PC-3 (cell line): ENCODE measurements at regions of chr18 and their contacts with region 1.

Region 1: GRCh38 chr18:9136315-9137155 is at the start of gene ANKRD12:
- DNase-seq: peak; percentile 98
- ATAC-seq: peak; percentile 72
- H3K4me3 ChIP-seq: peak within 1 kb of the TSS; percentile 77
- H3K27ac ChIP-seq: peak within 1 kb of the TSS; percentile 88
- H3K4me1 ChIP-seq: peaks cover 58% of the 10 kb centered on the region
- H3K27me3 ChIP-seq: no peaks in the 10 kb centered on the region
- CTCF ChIP-seq: no peak
- total RNA-seq, gene ANKRD12: 14.5 and 19.1 TPM in 2 replicates

Region 2: GRCh38 chr18:8696749-8697211 is 439.8 kb before region 1 on chr18:
- CTCF ChIA-PET with region 1: no interaction called
- POLR2A ChIA-PET with region 1: no interaction called
- intact Hi-C with region 1: no loop called
- DNase-seq: peak; percentile 81
- ATAC-seq: peak; percentile 86
- H3K4me3 ChIP-seq: no peak overlapping the region
- H3K27ac ChIP-seq: no peak overlapping the region
- H3K4me1 ChIP-seq: peaks cover 10% of the 10 kb centered on the region
- H3K27me3 ChIP-seq: no peaks in the 10 kb centered on the region
- CTCF ChIP-seq: peak; percentile 88

Region 3: GRCh38 chr18:9066817-9067306 is 69.7 kb before region 1 on chr18:
- CTCF ChIA-PET with region 1: no interaction called
- POLR2A ChIA-PET with region 1: no interaction called
- intact Hi-C with region 1: loop called (anchors 2 kb)
- DNase-seq: no peak
- ATAC-seq: no peak
- H3K4me3 ChIP-seq: no peak overlapping the region
- H3K27ac ChIP-seq: no peak overlapping the region
- H3K4me1 ChIP-seq: peaks cover 14% of the 10 kb centered on the region
- H3K27me3 ChIP-seq: no peaks in the 10 kb centered on the region
- CTCF ChIP-seq: no peak

Region 4: DNA sequence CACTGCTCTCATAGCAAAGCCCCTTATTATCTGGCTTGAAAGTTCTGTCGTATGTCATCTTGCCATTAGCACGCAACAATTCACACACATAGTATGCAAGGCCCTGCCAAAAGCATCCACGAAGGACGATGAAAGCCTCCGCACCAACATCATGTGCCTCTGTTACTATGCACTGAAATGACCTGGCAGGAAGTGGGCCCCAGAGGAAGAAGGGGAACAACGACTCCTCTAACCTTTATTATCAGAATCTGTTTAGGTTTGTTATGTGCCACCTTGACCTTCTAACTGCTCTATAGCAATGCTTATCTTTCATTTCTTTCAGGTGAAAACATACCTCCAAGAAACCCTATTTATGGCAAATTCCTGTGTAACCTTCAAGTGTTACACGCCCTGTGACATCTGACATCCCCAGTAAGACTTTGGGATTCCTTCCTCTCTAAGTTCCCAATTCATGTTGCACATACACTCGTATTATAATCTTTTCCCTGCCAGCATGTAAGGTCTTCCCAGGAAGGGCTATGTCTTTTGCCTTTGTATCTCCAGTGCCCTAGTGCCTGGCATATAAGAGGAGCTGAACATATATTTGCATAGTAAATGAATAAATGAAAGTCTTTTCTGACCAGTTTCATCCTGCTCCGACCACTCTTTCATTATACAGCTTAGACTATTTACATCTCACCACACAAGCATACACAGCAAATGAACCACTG is 41.1 kb before region 1 on chr18:
- CTCF ChIA-PET with region 1: no interaction called
- POLR2A ChIA-PET with region 1: interaction called, 12 read pairs
- intact Hi-C with region 1: loop called (anchors 2 kb)
- DNase-seq: no peak
- ATAC-seq: no peak
- H3K4me3 ChIP-seq: no peak overlapping the region
- H3K27ac ChIP-seq: peak overlapping the region; percentile 88
- H3K4me1 ChIP-seq: peaks cover 30% of the 10 kb centered on the region
- H3K27me3 ChIP-seq: no peaks in the 10 kb centered on the region
- CTCF ChIP-seq: no peak

Region 5: DNA sequence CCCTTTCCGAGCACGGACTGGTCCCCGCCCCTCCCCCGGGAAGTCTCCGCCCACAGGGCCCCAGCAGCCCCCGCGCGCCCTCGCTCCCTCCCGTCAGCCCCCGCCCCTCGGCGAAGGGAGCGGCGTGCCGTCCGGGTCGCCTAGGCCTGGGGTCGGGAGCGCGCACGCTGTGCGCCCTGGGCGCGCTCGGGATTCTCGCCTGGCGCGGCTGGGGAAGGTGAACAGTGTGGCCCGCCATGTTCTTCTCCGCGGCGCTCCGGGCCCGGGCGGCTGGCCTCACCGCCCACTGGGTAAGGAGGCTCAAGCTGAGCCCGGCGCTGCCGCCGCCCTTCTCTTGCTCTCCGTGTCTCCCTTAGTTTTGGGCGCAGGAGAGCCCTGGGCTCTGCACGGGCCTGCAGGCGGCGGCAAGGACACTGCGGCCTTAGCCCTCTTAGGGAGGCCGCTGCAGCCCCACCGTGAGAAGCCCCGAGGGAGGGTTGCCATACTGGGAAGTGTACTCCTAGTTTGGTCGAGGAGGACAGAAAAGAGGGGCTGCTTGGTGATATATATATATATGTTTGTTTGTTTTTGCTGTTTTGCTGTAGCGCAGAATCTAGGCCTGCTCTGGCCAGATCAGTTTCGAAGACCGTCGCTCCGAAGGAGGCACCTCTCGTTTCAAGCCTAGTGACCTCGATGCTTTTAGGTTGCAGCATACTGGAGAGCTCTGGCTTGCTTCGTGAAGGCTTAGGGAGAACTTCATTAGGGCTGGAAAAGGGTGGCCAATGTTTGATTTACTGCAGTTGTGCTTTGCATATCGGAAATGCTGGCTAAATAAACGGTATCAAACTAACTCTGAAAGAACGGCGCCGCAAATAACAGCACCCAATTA is 33.8 kb before region 1 on chr18 and contains the start of gene NDUFV2:
- CTCF ChIA-PET with region 1: interaction called, 5 read pairs
- POLR2A ChIA-PET with region 1: interaction called, 8 read pairs
- intact Hi-C with region 1: loop called (anchors 1 kb)
- DNase-seq: peak; percentile 97
- ATAC-seq: peak; percentile 81
- H3K4me3 ChIP-seq: peak within 1 kb of the TSS; percentile 73
- H3K27ac ChIP-seq: peak within 1 kb of the TSS; percentile 80
- H3K4me1 ChIP-seq: peaks cover 55% of the 10 kb centered on the region
- H3K27me3 ChIP-seq: no peaks in the 10 kb centered on the region
- CTCF ChIP-seq: no peak
- total RNA-seq, gene NDUFV2: 188 and 272 TPM in 2 replicates

Region 6: DNA sequence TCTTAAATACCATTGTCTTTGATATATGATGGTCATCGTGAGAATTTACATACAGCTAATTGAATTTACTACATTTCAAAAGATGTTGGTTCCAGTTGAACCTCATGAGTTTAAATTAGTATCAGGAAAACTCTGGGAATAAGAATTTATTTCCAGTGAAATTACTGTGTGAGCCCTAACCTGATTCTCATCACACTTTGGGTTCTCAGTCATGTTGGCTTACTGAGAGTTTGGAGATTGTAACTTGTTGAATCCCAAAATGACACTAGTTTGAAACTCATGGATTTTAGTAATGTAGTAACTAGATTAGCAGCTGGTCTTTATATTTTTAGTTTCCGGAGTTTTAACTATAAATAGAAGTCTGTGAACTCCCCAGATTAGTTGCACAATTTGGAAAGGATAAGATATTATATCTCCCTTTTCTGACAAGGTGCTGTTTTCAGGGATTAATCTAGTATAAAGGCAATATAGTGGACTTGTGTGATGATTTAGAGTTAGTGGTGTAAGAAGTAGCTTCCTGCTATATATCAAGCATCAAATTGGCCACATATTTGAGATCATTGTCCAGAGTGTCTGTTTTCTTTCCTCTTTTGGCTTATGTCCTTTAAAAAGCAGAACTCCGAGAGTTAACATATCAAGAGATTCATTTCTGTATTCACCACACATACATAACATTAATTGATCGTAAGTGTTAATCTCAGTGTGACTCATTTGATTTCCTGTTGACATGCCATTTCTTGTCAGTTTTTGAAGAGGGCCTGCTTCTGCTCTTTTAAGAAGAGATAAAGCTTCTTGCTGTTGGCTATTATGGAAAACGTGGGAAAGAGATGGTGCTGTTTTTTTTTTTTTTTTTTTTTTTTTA is 18.3 kb before region 1 on chr18:
- CTCF ChIA-PET with region 1: interaction called, 9 read pairs
- POLR2A ChIA-PET with region 1: interaction called, 3 read pairs
- intact Hi-C with region 1: loop called (anchors 1 kb)
- DNase-seq: no peak
- ATAC-seq: no peak
- H3K4me3 ChIP-seq: 0 out of 2 replicates have a peak overlapping the region, but pooled peaks have one; percentile 36
- H3K27ac ChIP-seq: peak overlapping the region; percentile 70
- H3K4me1 ChIP-seq: peaks cover 23% of the 10 kb centered on the region
- H3K27me3 ChIP-seq: no peaks in the 10 kb centered on the region
- CTCF ChIP-seq: no peak

Region 7: GRCh38 chr18:9614401-9615279 is 478.1 kb after region 1 on chr18 and contains the start of gene PPP4R1:
- CTCF ChIA-PET with region 1: no interaction called
- POLR2A ChIA-PET with region 1: no interaction called
- intact Hi-C with region 1: no loop called
- DNase-seq: peak; percentile 72
- ATAC-seq: peak; percentile 42
- H3K4me3 ChIP-seq: peak within 1 kb of the TSS; percentile 78
- H3K27ac ChIP-seq: peak within 1 kb of the TSS; percentile 95
- H3K4me1 ChIP-seq: peaks cover 68% of the 10 kb centered on the region
- H3K27me3 ChIP-seq: no peaks in the 10 kb centered on the region
- CTCF ChIP-seq: no peak
- total RNA-seq, gene PPP4R1: 154 and 185 TPM in 2 replicates